Mammary epithelial cell (primary cell): ENCODE measurements at regions of chr17 and their contacts with region 1.

Region 1: DNA sequence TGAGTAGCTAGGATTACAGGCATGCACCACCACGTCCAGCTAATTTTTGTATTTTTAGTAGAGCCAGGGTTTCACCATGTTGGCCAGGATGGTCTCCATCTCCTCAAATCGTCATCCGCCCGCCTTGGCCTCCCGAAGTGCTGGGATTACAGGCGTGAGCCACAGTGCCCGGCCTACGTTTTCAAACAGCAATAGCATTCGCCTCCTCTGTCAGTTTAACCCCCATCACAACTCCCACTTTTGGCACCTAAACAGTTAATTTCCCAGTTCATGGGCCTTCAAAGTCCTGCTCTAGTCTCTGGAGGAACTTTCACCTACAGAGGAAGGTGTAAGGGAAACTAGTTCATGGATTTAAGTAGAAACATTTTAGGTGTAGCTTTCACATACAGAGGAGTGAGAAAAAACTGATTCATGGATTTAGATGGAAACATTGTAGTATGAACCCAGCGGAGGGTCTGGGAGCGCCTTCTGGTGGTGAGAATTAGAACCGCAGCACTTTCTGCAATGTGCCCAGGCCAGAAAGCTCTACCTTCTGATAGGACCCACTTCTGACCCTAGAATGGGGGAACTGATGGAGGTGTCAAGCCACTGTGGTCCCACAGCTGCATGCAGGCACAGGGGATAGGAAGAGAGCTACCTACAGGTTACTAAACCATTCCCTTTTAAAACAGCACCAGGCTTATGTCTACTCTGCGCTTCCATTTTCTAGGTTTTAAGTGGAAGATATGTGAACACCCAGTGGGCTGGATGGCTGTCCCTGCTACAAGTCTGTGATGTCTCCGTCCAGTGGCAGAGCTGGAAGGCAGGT is 12.0 kb upstream of the MEOX1 start:
- DNase-seq: peak; percentile 50
- H3K4me3 ChIP-seq: no peak overlapping the region
- H3K27ac ChIP-seq: no peak overlapping the region
- H3K4me1 ChIP-seq: peaks cover 7% of the 10 kb centered on the region
- H3K27me3 ChIP-seq: no peaks in the 10 kb centered on the region
- CTCF ChIP-seq: peak; percentile 95 to 97

Region 2: GRCh38 chr17:43517615-43518386 is 155.9 kb before region 1 on chr17:
- CTCF ChIA-PET with region 1: no interaction called
- dilution Hi-C with region 1: loop called (anchors 5 kb)
- in situ Hi-C with region 1: loop called in 1 of 2 experiments (anchors 5 kb)
- intact Hi-C with region 1: no loop called
- DNase-seq: peak; percentile 9
- H3K4me3 ChIP-seq: no peak overlapping the region
- H3K27ac ChIP-seq: no peak overlapping the region
- H3K4me1 ChIP-seq: no peaks in the 10 kb centered on the region
- H3K27me3 ChIP-seq: no peaks in the 10 kb centered on the region
- CTCF ChIP-seq: no peak

Region 3: DNA sequence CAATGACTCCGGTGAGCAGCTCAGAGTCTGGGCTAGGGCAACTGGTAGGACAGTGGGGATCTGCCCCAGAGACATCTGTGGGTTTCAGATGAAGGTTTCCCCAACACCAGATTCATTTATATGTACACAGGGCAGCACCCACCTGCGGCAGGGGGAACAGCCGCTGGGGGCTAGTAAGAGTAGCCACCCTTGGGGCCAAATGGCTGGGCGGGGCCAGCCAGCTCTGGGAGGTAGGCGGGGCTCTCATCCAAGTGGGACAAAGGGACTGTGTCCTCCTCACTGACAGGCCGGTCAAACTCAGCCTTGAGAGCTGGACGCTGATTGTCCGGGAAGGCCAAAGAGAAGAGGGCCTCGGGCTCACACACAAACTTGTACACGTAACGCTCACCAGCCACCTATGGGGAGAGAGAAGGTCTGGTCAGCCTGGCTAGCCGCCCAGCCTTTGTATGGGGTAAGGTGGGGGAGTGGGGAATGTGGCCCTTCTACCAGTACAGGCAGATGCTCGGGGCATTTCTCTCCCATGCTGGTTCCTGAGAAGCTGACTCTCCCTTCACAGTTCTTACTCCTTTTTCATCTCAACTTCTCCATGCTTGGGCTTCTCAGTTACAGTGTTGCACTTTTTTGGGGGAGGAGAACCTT is 145.3 kb before region 1 on chr17:
- CTCF ChIA-PET with region 1: interaction called, 9 read pairs
- dilution Hi-C with region 1: loop called (anchors 5 kb)
- in situ Hi-C with region 1: no loop called
- intact Hi-C with region 1: no loop called
- DNase-seq: no peak
- H3K4me3 ChIP-seq: no peak overlapping the region
- H3K27ac ChIP-seq: no peak overlapping the region
- H3K4me1 ChIP-seq: peaks cover 27% of the 10 kb centered on the region
- H3K27me3 ChIP-seq: no peaks in the 10 kb centered on the region
- CTCF ChIP-seq: no peak

Region 4: GRCh38 chr17:43546319-43547188 is 127.2 kb before region 1 on chr17 and contains the start of gene ETV4:
- CTCF ChIA-PET with region 1: interaction called, 13 read pairs
- dilution Hi-C with region 1: no loop called
- in situ Hi-C with region 1: no loop called
- intact Hi-C with region 1: no loop called
- DNase-seq: peak; percentile 97
- H3K4me3 ChIP-seq: peak within 1 kb of the TSS; percentile 44 to 75 (median 60)
- H3K27ac ChIP-seq: peak within 1 kb of the TSS; percentile 84
- H3K4me1 ChIP-seq: peaks cover 46% of the 10 kb centered on the region
- H3K27me3 ChIP-seq: no peaks in the 10 kb centered on the region
- CTCF ChIP-seq: no peak
- total RNA-seq, gene ETV4: 10.2 to 46.0 TPM